Lower leg skin (tissue), 4 donors: ENCODE measurements at regions of chr11 and their contacts with region 1.

Region 1: GRCh38 chr11:28756977-28757376 is 648.8 kb downstream of the METTL15 start:
- DNase-seq: no peak
- H3K4me3 ChIP-seq: no peak overlapping the region
- CTCF ChIP-seq: no peak
- POLR2A ChIP-seq: no peak

Region 2: GRCh38 chr11:28490773-28491382 is 266.1 kb before region 1 on chr11:
- intact Hi-C with region 1: no loop called
- DNase-seq: no peak
- H3K4me3 ChIP-seq: no peak overlapping the region
- CTCF ChIP-seq: no peak
- POLR2A ChIP-seq: no peak

Region 3: DNA sequence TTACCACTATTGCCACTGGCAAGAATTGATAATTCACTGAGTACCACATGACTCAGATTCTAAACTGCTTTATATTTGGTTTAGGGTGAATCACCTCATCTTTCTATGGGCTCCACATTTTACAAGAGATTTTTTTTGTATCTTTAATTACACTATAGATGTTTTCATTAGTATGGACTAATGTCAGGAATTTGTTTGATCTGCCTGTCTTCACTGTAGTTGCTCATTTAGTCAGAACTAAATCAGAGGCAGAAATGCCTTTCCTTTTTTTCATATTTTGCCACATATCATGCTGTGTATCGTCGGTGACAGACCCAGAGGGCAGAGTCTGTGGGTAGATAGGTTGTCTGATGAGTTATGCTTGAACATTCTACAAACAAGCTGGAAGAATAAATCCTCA is 124.6 kb before region 1 on chr11:
- intact Hi-C with region 1: no loop called
- DNase-seq: no peak
- H3K4me3 ChIP-seq: no peak overlapping the region
- CTCF ChIP-seq: no peak
- POLR2A ChIP-seq: no peak

Region 4: GRCh38 chr11:29405305-29405704 is 648.3 kb after region 1 on chr11:
- intact Hi-C with region 1: loop called (anchors 10 kb)
- DNase-seq: no peak
- H3K4me3 ChIP-seq: no peak overlapping the region
- CTCF ChIP-seq: no peak
- POLR2A ChIP-seq: no peak